ENCODE measurements at regions of chr1 and their contacts with region 1.

Region 1: GRCh38 chr1:16440470-16441281 is at the start of gene NECAP2:
- DNase-seq: peak; percentile 82
- ATAC-seq: peak; percentile 97
- H3K4me3 ChIP-seq: peak within 1 kb of the TSS; percentile 84 to 94
- H3K27ac ChIP-seq: peak within 1 kb of the TSS; percentile 89
- H3K4me1 ChIP-seq: no peaks in the 10 kb centered on the region
- H3K27me3 ChIP-seq: no peaks in the 10 kb centered on the region
- CTCF ChIP-seq: peak; percentile 97
- total RNA-seq, gene NECAP2: 56.8 TPM

Region 2: GRCh38 chr1:15206418-15207030 is 1234.2 kb before region 1 on chr1:
- CTCF ChIA-PET with region 1: no interaction called
- POLR2A ChIA-PET with region 1: no interaction called
- in situ Hi-C with region 1: no loop called
- intact Hi-C with region 1: no loop called
- DNase-seq: no peak
- ATAC-seq: no peak; the same call in 1 of the 2 replicates
- H3K4me3 ChIP-seq: no peak overlapping the region
- H3K27ac ChIP-seq: no peak overlapping the region
- H3K4me1 ChIP-seq: peaks cover 9% of the 10 kb centered on the region
- H3K27me3 ChIP-seq: no peaks in the 10 kb centered on the region
- CTCF ChIP-seq: no peak

Region 3: GRCh38 chr1:16456161-16456560 is 15.5 kb after region 1 on chr1:
- CTCF ChIA-PET with region 1: no interaction called
- POLR2A ChIA-PET with region 1: interaction called, 10 read pairs
- in situ Hi-C with region 1: no loop called
- intact Hi-C with region 1: no loop called
- DNase-seq: no peak
- ATAC-seq: no peak
- H3K4me3 ChIP-seq: no peak overlapping the region
- H3K27ac ChIP-seq: no peak overlapping the region
- H3K4me1 ChIP-seq: no peaks in the 10 kb centered on the region
- H3K27me3 ChIP-seq: no peaks in the 10 kb centered on the region
- CTCF ChIP-seq: no peak

Measured in Panc1 (cell line).